ENCODE measurements at regions of chr14 and their contacts with region 1.

Region 1: GRCh38 chr14:24146978-24147760 is at the start of gene RNF31:
- DNase-seq: peak; percentile 99
- H3K4me3 Mint-ChIP-seq: peak within 1 kb of the TSS; percentile 98
- H3K27ac Mint-ChIP-seq: peak within 1 kb of the TSS; percentile 61
- H3K4me1 Mint-ChIP-seq: peaks cover under 1% of the 10 kb centered on the region
- H3K27me3 Mint-ChIP-seq: no peaks in the 10 kb centered on the region
- CTCF ChIP-seq: no peak
- total RNA-seq, gene RNF31: 62.2 and 67.4 TPM in 2 replicates

Region 2: DNA sequence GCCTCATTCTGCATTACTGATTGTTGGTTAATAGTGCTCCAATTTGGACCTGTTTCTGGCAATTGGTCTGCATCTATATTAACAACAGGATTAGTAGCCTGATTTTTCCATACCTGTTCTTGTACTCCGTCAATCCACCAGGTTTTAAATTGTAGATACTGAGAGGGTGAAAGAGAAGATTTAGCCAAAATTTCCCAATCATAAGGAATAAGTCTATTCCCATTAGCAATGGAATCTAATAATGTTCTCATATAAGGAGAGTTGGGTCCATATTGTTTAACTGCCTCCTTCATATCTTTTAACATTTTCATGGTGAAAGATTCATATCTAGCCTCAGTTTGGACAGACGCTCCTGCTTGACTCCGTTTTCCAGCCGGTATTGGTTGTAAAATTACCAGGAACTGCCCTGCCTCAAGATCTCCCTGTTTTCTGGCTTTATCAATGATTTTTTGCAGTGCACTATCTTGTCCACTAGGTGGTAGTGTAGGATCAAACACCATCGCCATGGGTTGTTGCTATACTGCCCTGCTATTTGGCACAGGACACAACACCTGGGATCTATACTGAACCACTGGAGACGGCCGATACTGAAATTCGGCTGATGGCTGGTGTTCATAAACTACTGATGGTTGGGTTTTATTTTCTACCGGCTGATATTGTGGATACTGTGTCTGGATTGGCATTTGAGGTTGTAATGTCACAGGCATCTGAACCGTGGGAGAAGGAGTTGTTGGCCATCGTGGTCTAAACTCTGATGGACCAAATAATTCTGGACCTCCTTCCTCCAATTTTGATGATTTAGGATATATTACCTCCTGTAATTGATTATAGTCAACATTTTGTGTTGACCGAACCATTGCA is 133.3 kb before region 1 on chr14:
- CTCF ChIA-PET with region 1: no interaction called
- POLR2A ChIA-PET with region 1: no interaction called
- intact Hi-C with region 1: loop called (anchors 2 kb)
- DNase-seq: peak; percentile 83
- H3K4me3 Mint-ChIP-seq: no peak overlapping the region
- H3K27ac Mint-ChIP-seq: no peak overlapping the region
- H3K4me1 Mint-ChIP-seq: no peaks in the 10 kb centered on the region
- H3K27me3 Mint-ChIP-seq: peaks cover 20% of the 10 kb centered on the region
- CTCF ChIP-seq: peak; percentile 80

Region 3: GRCh38 chr14:24108336-24108874 is 38.8 kb before region 1 on chr14:
- CTCF ChIA-PET with region 1: interaction called, 18 read pairs
- POLR2A ChIA-PET with region 1: interaction called, 252 read pairs
- intact Hi-C with region 1: no loop called
- DNase-seq: no peak
- H3K4me3 Mint-ChIP-seq: no peak overlapping the region
- H3K27ac Mint-ChIP-seq: no peak overlapping the region
- H3K4me1 Mint-ChIP-seq: peaks cover 11% of the 10 kb centered on the region
- H3K27me3 Mint-ChIP-seq: no peaks in the 10 kb centered on the region
- CTCF ChIP-seq: no peak

Region 4: DNA sequence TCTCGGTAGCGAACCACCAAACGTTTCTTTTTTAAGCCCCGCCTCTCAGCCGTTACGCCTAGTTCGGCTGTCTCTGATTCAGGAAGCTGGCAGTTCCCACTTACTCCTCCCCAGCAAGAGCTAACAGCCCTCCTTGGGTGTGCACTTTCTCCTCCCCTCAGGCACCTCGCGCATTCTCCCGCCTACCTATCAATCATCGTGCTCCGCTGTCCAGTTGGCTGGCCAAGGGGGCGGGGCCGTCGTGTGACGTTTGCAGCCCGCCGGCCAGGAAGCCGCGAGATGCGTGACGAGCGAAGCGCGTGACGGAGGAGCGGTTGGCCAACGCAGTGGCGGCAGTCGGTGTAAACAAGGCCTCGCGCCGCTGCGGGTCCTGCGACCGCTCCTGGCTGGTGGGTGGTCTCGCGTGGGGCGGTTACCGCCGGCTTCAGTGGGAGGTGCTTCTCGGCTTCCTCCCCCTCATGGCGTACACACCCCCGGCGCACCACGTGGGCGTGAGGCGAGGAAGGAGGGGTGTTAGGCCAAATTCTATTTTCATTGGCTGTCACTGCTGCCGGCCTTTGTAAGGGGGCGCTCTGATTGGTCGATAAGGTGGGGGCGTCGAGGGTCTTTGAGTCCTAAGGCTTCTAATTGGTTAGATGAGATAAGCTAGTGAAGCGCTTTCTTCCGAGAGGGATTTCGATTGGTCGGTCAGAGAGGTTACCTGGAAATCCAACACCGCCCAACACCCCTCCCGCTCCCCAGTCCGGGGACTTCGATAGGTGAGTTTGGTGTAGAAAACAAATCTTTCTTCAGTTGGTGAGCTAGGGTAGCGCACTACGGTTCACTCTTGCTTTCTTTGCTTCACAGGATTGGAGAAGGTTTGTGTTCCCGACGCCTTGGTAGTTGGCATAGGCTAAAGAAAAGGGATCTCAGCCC is 32.4 kb before region 1 on chr14 and contains the starts of genes DCAF11 and NRL:
- CTCF ChIA-PET with region 1: interaction called, 7 read pairs
- POLR2A ChIA-PET with region 1: interaction called, 252 read pairs
- intact Hi-C with region 1: loop called (anchors 2 kb)
- DNase-seq: peak; percentile 100
- H3K4me3 Mint-ChIP-seq: peak within 1 kb of the TSS; percentile 97
- H3K27ac Mint-ChIP-seq: peak within 1 kb of the TSS; percentile 99
- H3K4me1 Mint-ChIP-seq: peaks cover 9% of the 10 kb centered on the region
- H3K27me3 Mint-ChIP-seq: no peaks in the 10 kb centered on the region
- CTCF ChIP-seq: no peak
- total RNA-seq, gene DCAF11: 38.6 and 48.8 TPM in 2 replicates
- total RNA-seq, gene NRL: 1.3 and 2.1 TPM in 2 replicates

Region 5: GRCh38 chr14:24135834-24136542 is 11.2 kb before region 1 on chr14 and contains the start of gene PSME1:
- CTCF ChIA-PET with region 1: interaction called, 5 read pairs
- POLR2A ChIA-PET with region 1: interaction called, 68 read pairs
- intact Hi-C with region 1: no loop called
- DNase-seq: peak; percentile 89
- H3K4me3 Mint-ChIP-seq: peak within 1 kb of the TSS; percentile 75
- H3K27ac Mint-ChIP-seq: peak within 1 kb of the TSS; percentile 86
- H3K4me1 Mint-ChIP-seq: peaks cover 42% of the 10 kb centered on the region
- H3K27me3 Mint-ChIP-seq: no peaks in the 10 kb centered on the region
- CTCF ChIP-seq: no peak
- total RNA-seq, gene PSME1: 126 and 135 TPM in 2 replicates

Region 6: DNA sequence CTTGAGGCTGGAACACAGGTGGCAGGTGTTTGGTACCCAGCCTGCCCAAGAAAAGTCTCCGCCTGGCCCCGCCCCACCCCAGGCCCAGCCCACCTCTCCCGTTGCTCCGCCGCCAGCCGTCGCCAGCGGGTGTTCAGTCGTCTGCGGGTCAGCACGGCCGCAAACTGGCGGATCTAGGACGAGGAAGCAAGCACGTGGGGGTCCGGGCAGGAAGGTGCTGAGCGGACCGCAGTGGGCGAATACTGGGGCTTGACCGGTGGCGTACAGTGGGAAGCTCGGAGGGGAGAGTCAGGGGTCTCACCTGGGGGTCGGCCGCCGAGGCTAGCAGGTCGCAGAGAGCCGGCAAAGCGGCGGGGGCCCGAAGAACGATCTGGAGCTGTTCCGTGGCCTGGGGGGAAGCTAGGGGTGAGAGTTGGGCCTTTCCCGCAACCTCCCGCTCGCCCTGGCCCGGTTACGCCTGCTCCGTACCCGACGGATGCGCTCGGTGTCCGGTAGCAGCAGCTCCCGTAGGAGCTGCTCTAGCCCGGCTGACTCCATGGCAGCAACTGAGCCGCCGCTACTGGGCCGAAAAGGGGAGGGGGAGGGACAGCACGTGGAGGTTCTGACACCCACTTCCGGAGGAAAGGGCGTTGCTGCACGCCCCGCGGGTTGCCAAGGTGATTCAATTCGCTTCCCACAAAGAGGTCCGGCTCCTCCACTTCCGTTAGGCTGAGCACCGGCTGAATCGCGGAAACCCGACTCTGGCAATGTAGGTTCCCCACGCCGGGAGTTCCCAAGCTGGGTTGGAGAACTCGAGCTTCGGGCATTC is 41.3 kb after region 1 on chr14 and contains the start of gene IPO4:
- CTCF ChIA-PET with region 1: no interaction called
- POLR2A ChIA-PET with region 1: interaction called, 25 read pairs
- intact Hi-C with region 1: no loop called
- DNase-seq: peak; percentile 97
- H3K4me3 Mint-ChIP-seq: peak within 1 kb of the TSS; percentile 81
- H3K27ac Mint-ChIP-seq: peak within 1 kb of the TSS; percentile 84
- H3K4me1 Mint-ChIP-seq: peaks cover 12% of the 10 kb centered on the region
- H3K27me3 Mint-ChIP-seq: no peaks in the 10 kb centered on the region
- CTCF ChIP-seq: no peak
- total RNA-seq, gene IPO4: 57.2 and 100 TPM in 2 replicates

Region 7: GRCh38 chr14:24215495-24216344 is 68.6 kb after region 1 on chr14 and contains the start of gene MDP1:
- CTCF ChIA-PET with region 1: no interaction called
- POLR2A ChIA-PET with region 1: interaction called, 13 read pairs
- intact Hi-C with region 1: no loop called
- DNase-seq: peak; percentile 87
- H3K4me3 Mint-ChIP-seq: peak within 1 kb of the TSS; percentile 80
- H3K27ac Mint-ChIP-seq: peak within 1 kb of the TSS; percentile 73
- H3K4me1 Mint-ChIP-seq: peaks cover 20% of the 10 kb centered on the region
- H3K27me3 Mint-ChIP-seq: no peaks in the 10 kb centered on the region
- CTCF ChIP-seq: peak; percentile 25
- total RNA-seq, gene MDP1: 11.0 and 20.2 TPM in 2 replicates

Region 8: GRCh38 chr14:24721775-24722174 is 574.6 kb after region 1 on chr14:
- CTCF ChIA-PET with region 1: no interaction called
- POLR2A ChIA-PET with region 1: no interaction called
- intact Hi-C with region 1: no loop called
- DNase-seq: no peak
- H3K4me3 Mint-ChIP-seq: no peak overlapping the region
- H3K27ac Mint-ChIP-seq: no peak overlapping the region
- H3K4me1 Mint-ChIP-seq: no peaks in the 10 kb centered on the region
- H3K27me3 Mint-ChIP-seq: peaks cover 7% of the 10 kb centered on the region
- CTCF ChIP-seq: no peak

Measured in MCF 10A (cell line).